ENCODE measurements at regions of chr2 and their contacts with region 1.

Region 1: DNA sequence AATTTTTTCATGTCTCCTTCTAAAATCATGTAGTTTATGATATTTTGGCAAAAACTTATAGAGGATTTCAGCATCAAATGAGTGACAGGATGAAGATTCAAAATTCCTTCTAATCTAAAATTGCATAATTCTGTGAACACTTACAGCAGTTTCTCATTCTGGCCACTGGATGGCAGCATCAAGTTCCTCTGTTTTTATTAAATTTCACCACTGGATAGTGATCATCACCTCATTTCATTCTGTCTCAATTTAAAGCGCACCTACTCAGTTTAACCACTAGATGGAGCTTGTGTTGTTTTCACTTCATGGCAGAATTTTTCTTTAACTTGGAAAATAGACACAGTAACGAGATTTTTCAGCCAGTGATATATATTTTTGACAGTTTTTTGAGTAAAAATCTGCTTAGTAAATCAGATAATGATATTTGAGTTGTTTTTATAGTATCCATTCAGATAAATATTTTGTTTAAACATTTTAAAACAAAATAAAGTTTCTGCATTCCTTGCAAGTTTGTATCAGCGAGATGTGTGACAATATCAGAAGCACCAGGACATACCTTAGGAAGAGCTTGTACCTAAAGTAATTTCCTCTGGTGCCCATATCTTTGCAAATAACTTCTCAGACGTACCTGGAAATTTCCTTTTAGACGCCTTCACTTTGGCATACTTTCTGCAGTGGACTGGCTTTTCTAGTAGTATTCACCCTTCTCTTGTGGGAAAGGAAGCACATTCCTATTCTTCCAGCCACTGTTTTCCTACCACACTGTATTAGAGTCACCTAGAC is 94.7 kb upstream of the ARHGAP15 start:
- DNase-seq: peak; percentile 57
- H3K4me3 ChIP-seq: no peak overlapping the region
- H3K27ac ChIP-seq: no peak overlapping the region
- H3K27me3 ChIP-seq: no peaks in the 10 kb centered on the region
- CTCF ChIP-seq: peak; percentile 96

Region 2: DNA sequence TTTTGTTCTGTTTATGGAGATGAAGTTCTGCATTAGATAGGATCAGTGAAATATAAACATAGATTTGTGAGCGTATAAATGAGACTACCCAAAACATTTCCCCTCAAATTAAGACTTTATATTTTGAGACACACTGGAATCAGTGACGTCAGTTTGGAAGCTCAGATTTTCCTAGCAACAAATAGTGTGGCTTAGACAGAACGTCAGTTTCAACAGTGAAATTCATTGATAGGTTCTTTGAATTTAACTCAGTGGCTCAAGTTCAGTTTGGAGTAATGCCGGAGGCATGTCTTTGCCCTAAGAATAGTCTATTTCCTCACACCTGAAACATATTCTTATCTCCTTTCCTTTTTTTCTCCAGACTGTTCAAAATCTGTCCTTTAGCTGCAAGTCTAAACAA is 18.8 kb before region 1 on chr2:
- CTCF ChIA-PET with region 1: interaction called, 14 read pairs
- POLR2A ChIA-PET with region 1: no interaction called
- DNase-seq: no peak
- H3K4me3 ChIP-seq: no peak overlapping the region
- H3K27ac ChIP-seq: no peak overlapping the region
- H3K27me3 ChIP-seq: no peaks in the 10 kb centered on the region
- CTCF ChIP-seq: no peak

Region 3: GRCh38 chr2:143058851-143059250 is 24.4 kb after region 1 on chr2:
- CTCF ChIA-PET with region 1: interaction called, 18 read pairs
- POLR2A ChIA-PET with region 1: no interaction called
- DNase-seq: no peak
- H3K4me3 ChIP-seq: no peak overlapping the region
- H3K27ac ChIP-seq: no peak overlapping the region
- H3K27me3 ChIP-seq: no peaks in the 10 kb centered on the region
- CTCF ChIP-seq: no peak

Region 4: DNA sequence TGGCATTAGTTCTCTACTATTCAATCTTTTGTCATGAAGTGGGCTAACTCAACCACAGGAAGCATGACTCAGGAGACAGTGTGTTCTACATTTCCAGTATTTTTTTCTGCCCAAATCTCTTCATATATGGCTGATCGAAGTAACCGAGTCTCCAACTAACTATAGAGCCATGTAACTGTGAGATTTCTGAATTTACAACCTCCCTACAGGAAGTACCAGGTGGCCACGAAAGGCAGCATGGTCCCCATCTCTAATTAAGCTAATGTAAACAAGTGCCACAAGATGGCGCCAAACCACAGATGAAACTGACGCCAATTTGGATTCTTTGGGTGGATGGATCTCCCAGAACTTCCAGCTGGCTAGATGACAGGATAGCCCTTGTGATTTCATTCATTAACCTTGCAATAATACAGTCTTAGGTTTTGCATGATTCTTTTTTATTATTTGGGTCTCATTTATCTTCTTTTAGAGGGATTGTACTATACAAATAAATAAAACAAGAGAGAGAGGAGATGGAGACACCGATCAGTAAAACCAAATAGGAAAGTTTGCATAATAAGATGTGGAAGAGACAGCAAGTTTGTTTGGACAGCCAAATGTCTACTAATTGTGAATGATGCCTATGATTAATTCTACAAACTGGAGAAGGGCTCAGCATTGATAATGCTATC is 76.4 kb after region 1 on chr2:
- CTCF ChIA-PET with region 1: interaction called, 12 read pairs
- POLR2A ChIA-PET with region 1: no interaction called
- DNase-seq: peak; percentile 6
- H3K4me3 ChIP-seq: no peak overlapping the region
- H3K27ac ChIP-seq: no peak overlapping the region
- H3K27me3 ChIP-seq: no peaks in the 10 kb centered on the region
- CTCF ChIP-seq: peak; percentile 54

Region 5: GRCh38 chr2:143152637-143153036 is 118.2 kb after region 1 on chr2:
- CTCF ChIA-PET with region 1: no interaction called
- POLR2A ChIA-PET with region 1: no interaction called
- DNase-seq: no peak
- H3K4me3 ChIP-seq: no peak overlapping the region
- H3K27ac ChIP-seq: no peak overlapping the region
- H3K27me3 ChIP-seq: no peaks in the 10 kb centered on the region
- CTCF ChIP-seq: no peak

Region 6: DNA sequence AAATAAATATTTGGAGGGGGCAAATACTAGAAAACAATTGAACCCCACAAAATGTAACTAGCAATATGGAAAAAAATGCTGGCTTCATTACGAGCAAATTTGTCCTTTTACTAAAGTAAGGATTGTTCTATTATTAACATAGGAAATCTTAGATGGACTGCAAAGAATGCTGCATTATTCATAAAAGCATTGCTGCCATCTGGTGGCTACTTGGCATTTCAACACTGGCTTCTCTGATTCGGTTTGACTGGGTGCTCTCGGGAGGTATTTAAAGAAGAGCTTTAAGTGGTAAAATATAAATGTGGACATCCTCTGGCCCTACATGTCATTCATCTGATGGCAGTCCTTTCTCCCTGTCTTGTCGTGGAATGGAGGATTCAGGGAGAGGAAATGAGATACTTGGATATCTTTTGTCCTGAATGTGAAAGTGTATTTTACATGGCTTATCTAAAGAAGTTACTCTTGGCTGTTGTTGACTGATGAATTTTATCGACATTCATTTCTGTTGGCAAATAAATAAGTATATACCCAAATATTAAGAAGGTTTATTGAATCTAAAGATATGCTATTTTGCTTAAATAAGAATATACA is 225.0 kb after region 1 on chr2:
- CTCF ChIA-PET with region 1: interaction called, 67 read pairs
- POLR2A ChIA-PET with region 1: no interaction called
- DNase-seq: peak; percentile 37
- H3K4me3 ChIP-seq: no peak overlapping the region
- H3K27ac ChIP-seq: no peak overlapping the region
- H3K27me3 ChIP-seq: no peaks in the 10 kb centered on the region
- CTCF ChIP-seq: peak; percentile 81

Measured in AG04450 (cell line).